Adrenal gland (tissue), 19 donors: ENCODE measurements at regions of chr16 and their contacts with region 1.

Region 1: GRCh38 chr16:68093816-68094613 is 8.8 kb downstream of the NFATC3 start:
- DNase-seq: no peak
- H3K4me3 ChIP-seq: no peak overlapping the region
- H3K27ac ChIP-seq: no peak overlapping the region
- H3K4me1 ChIP-seq: peaks cover 21 to 58% of the 10 kb centered on the region in 2 donors
- H3K27me3 ChIP-seq: no peaks in the 10 kb centered on the region
- CTCF ChIP-seq: peak; percentile 16 to 58 (median 52)
- POLR2A ChIP-seq: no peak

Region 2: DNA sequence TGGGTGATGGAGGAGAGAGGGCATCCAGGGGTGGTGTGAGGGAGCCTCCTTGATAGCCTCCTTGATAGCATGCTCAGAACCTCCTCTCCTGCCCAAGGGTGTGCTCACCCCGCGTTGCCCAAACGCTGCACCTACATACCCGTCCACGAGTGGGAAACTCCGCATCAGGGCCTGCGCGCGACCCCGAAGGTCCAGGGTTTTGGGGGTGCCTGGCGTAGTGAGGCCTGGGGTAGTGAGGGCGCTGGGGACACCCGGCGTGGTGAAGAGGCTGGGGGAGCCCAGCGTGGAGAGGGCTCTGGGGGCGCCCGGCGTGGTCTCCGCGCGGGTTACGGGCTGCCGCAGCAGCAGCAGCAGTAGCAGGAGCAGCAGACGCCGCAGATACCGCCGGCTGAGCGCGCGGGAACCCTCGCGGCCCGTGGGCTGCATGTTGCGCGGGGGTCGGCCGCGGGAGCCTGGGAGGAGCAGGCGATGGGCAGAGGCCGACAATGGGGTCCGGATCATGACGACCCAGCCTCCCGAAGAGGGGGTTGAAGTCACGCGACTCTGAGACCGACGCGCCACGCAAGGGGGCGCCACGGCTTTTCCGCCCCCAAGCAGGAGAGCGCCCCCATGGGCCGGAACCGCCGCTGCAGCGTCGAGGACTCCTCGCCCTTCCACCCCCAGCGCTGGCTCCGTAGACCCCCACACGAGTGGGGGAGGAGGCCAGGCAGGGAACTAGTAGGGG is 113.9 kb before region 1 on chr16 and contains the start of gene DPEP3:
- intact Hi-C with region 1: no loop called
- DNase-seq: no peak
- H3K4me3 ChIP-seq: no peak within 1 kb of the TSS
- H3K27ac ChIP-seq: no peak within 1 kb of the TSS
- H3K4me1 ChIP-seq: peaks cover 0 to 15% of the 10 kb centered on the region in 2 donors
- H3K27me3 ChIP-seq: no peaks in the 10 kb centered on the region
- CTCF ChIP-seq: no peak
- POLR2A ChIP-seq: no peak
- total RNA-seq, gene DPEP3: 0.11 TPM in 1 of 9 donors, not detected in the others

Region 3: GRCh38 chr16:68237243-68238028 is 143.4 kb after region 1 on chr16:
- intact Hi-C with region 1: loop called in 1 of 2 experiments (anchors 10 kb)
- DNase-seq: peak; percentile 98 to 99 (median 99)
- H3K4me3 ChIP-seq: peak overlapping the region in 2 of 4 donors; percentile 53 to 57
- H3K27ac ChIP-seq: peak overlapping the region; percentile 64 to 88 (median 86)
- H3K4me1 ChIP-seq: peaks cover 5 to 22% of the 10 kb centered on the region in 2 donors
- H3K27me3 ChIP-seq: no peaks in the 10 kb centered on the region
- CTCF ChIP-seq: peak in 1 of 6 experiments; percentile 7
- POLR2A ChIP-seq: peak; percentile 77 to 97